Posterior vena cava (tissue), 2 donors: ENCODE measurements at regions of chr11 and their contacts with region 1.

Region 1: DNA sequence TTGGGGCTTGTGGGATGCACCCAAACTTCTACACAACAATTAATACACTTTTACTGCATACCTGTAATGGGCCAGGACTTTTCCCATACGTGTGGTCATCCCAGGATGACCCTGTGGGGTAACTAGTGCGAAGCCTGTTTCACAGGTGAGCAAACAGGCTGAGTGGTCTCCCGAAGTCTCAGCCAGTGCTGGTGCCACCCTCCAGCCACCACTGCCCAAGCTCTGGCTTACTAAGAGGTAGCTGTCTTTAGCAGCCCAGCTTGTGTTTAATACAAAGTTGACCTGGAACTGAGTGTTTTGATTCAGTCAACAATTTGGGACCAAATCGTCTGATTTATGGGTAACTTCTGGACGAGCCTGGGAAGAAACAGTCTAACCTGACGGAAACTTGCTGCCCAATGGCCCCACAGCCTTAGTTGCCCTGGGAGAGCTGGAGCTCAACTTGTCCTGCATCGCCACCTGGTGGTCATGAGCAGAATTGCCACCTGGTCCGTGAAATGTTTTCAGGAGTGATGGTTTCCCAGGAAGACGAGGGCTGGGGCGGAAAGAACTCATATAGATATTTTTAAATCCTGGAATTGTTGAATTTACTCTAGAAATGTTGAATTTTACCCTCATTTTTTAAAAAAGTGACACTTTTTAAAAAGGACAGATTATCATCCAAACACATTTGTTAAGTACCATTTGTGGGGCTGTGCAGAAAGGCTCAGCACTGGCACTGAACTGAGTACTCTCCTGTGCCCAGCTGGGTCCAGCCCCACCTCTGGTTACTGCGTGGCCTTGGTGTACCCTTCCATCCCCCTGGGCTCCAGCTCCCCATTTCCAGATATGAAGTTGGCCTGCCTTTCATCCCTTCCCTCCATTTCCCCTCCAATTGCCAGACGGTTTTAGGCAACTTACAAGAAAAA is 95.5 kb upstream of the PARVA start:
- DNase-seq: peak; percentile 95

Region 2: GRCh38 chr11:11993839-11994238 is 288.0 kb before region 1 on chr11:
- intact Hi-C with region 1: no loop called
- DNase-seq: no peak

Region 3: DNA sequence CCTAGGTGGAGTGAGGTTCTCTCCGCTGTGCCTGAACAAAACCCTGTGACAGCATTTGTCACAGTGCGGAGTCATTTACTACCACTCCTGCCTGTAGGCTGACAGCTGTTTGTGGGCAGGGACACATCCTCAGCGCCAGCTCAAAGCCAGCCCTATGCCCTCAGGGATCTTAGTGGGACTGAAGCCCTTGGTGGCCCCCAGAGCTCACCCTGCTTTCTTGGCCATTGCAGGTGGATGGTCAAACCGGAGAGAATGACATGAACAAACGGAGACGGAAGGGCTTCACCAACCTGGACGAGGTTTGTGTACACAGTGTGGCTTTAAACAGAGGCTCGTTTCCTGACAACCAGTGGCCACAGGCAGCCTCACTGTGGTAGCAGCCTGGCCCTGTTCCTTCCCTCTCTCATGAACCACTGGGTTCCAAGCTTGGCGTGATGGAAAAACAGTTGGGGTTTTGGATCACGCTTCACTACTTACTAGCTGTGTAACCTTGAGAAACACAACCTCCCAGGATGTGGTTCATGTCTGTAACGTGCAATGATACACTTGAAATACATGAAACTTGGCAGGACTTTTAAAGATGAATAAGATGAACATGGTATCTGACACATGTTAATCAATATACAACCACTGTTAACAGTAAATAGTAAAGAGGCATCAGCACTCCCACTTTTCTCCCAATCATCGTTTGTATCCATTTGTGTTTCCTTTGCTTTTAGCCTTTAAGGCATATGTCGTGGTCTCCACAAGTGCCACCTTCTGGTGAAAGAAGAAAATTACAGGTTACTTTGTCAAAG is 45.7 kb before region 1 on chr11:
- intact Hi-C with region 1: loop called in 1 of 2 experiments (anchors 10 kb)
- DNase-seq: no peak